ENCODE measurements at regions of chr5 and their contacts with region 1.

Region 1: DNA sequence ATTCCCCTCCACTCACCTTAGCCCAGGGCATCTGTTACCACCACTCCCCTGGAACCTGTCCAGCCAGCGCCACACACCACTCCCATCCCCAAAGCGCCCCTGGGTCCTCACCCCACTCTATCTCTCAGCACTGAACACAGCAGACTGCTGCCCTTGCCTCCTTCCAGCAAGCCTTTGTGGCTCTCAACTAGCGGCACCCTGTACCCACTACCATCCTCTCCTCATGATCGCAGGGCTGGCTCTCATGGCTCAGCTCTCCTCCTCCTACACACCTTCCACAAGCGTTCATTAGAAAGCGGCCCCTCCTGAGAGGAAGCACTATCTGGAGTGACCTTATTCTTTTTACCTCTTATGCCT is 13.3 kb upstream of the BASP1 start:
- DNase-seq: no peak
- ATAC-seq: no peak
- H3K4me3 ChIP-seq: no peak overlapping the region
- H3K27ac ChIP-seq: no peak overlapping the region
- H3K4me1 ChIP-seq: peaks cover 4% of the 10 kb centered on the region
- H3K27me3 ChIP-seq: no peaks in the 10 kb centered on the region
- CTCF ChIP-seq: no peak

Region 2: DNA sequence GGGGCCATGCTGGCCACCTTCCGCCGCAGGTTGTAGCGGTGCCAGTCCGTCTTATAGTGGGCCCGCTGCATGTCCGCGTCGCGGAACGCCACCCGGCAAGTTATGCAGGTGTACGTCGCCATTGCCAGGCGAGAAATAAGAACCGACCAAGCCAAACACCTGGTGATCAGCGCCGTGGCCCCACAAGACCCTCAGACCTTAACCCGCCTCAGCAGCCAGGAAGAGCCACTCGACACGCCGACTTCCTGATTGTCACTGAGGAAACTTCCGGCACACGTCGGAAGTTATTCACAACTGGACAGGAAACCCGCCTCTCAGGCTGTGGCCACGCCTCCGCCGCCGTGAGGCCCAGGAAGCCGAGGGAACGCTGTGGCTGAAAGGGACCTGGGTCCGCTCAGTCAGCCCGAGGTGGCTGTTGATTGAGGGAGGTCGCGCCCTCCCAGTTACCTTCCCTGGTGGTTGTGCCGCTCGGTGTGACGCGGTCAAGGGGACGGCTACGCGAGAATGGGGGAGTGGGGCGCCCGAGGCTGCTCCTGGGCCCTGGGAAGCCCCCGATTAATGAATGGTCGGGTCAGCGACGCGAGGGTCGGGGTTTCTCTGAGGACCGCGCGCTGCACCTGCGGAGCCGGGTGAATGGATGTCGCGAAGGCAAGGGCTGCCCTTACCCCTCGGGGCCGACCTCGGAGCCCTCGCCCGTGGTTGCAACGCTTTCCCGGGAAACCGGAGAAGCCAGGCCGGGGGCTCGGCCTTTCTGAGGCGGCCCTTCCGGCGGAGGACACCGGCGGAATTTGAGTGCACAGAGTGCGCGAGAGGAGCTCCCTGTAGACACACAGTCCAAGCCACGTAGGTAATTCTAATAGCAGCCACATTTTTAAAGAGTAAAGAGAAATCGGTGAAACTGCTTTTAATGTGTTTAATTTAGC is 738.3 kb before region 1 on chr5 and contains the start of gene ZNF622:
- intact Hi-C with region 1: loop called in 1 of 2 experiments (anchors 10 kb)
- DNase-seq: peak; percentile 90 to 95
- ATAC-seq: peak; percentile 81 to 89 (median 86)
- H3K4me3 ChIP-seq: peak within 1 kb of the TSS; percentile 83
- H3K27ac ChIP-seq: peak within 1 kb of the TSS; percentile 89
- H3K4me1 ChIP-seq: peaks cover 77% of the 10 kb centered on the region
- H3K27me3 ChIP-seq: no peaks in the 10 kb centered on the region
- CTCF ChIP-seq: no peak
- total RNA-seq, gene ZNF622: 11.8 to 77.2 (median 24.7) TPM

Region 3: GRCh38 chr5:16585041-16585667 is 619.0 kb before region 1 on chr5:
- intact Hi-C with region 1: loop called in 1 of 2 experiments (anchors 10 kb)
- DNase-seq: no peak
- ATAC-seq: peak in 2 of 4 donors; percentile 58 to 63
- H3K4me3 ChIP-seq: no peak overlapping the region
- H3K27ac ChIP-seq: no peak overlapping the region
- H3K4me1 ChIP-seq: no peaks in the 10 kb centered on the region
- H3K27me3 ChIP-seq: no peaks in the 10 kb centered on the region
- CTCF ChIP-seq: peak; percentile 34

Measured in psoas muscle (tissue), 8 donors.